ENCODE measurements at regions of chr3 and their contacts with region 1.

Region 1: DNA sequence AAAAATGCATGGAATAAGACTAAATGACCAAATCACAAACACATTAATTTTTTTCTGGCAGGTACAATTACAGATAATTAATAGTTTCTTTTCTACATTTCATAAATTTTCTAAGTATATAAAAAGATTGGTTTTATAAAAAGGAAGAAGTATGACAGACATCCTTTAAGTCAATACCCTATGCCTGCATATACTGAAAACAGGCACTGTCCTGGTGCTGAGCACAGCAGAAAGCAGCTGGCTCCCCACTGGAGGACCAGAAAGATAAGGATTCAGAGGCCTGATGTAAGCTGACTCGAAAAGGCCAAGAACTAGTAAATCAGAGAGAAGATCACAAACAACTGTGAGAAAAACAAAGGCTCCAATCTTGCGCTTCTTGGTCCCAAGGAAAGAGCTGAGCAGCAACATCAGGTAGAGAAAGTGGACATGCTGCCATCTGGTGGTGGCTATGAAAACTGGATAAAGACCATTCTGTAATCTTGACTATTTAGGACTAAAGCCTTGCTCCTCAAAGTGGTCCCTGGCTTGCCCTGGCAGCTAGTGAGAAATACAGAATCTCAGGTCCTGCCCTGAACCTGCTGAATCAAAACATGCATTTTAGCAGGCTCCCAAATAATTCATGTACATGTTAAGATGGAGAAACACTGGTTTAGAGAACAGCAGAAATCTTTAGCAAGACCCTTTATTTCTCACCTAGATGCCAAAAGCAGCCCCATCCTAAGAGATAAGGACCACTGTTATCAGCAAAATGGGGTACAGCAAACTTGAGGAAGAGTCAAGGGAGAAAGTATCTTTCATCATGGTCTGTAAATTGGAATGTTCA is 76.0 kb downstream of the TRANK1 start:
- DNase-seq: peak; percentile 57 to 66
- H3K4me3 ChIP-seq: no peak overlapping the region
- H3K4me1 ChIP-seq: no peaks in the 10 kb centered on the region
- H3K27me3 ChIP-seq: peaks cover 3% of the 10 kb centered on the region; the same call in 1 of the 2 replicates

Region 2: DNA sequence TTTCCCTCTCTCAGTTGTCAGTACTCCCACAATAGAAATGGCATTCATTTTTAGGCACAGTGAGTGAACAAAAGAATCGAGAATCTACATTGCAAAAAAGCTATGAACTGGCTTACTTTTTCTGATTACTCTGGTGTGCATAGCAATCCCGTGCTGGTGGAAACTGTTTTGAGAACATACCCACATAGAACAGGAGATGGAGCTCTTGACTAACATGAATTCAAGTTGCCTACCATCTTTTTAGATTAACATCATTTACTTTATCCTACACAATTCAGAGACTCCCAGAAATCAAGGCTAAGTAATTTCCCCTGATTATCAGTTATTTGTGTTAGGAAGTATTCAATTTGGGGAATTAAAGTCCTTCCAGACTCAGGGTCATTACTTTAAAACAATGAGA is 902.9 kb before region 1 on chr3:
- in situ Hi-C with region 1: loop called (anchors 25 kb)
- DNase-seq: peak; percentile 42 to 72
- H3K4me3 ChIP-seq: no peak overlapping the region
- H3K4me1 ChIP-seq: peaks cover 18% of the 10 kb centered on the region
- H3K27me3 ChIP-seq: no peaks in the 10 kb centered on the region